ENCODE measurements at regions of chr16 and their contacts with region 1.

Region 1: GRCh38 chr16:30065143-30065850 is at the start of gene ALDOA:
- DNase-seq: peak; percentile 91
- ATAC-seq: peak; percentile 86
- H3K4me3 Mint-ChIP-seq: peak within 1 kb of the TSS; percentile 99
- H3K27ac Mint-ChIP-seq: peak within 1 kb of the TSS; percentile 99
- H3K4me1 Mint-ChIP-seq: peaks cover 35% of the 10 kb centered on the region
- H3K27me3 Mint-ChIP-seq: no peaks in the 10 kb centered on the region
- CTCF ChIP-seq: no peak
- total RNA-seq, gene ALDOA: 611 and 613 TPM in 2 replicates

Region 2: GRCh38 chr16:29784157-29784556 is 281.1 kb before region 1 on chr16:
- CTCF ChIA-PET with region 1: no interaction called
- POLR2A ChIA-PET with region 1: no interaction called
- intact Hi-C with region 1: no loop called
- DNase-seq: no peak
- ATAC-seq: no peak
- H3K4me3 Mint-ChIP-seq: no peak overlapping the region
- H3K27ac Mint-ChIP-seq: no peak overlapping the region
- H3K4me1 Mint-ChIP-seq: peaks cover 14% of the 10 kb centered on the region
- H3K27me3 Mint-ChIP-seq: no peaks in the 10 kb centered on the region
- CTCF ChIP-seq: no peak

Region 3: DNA sequence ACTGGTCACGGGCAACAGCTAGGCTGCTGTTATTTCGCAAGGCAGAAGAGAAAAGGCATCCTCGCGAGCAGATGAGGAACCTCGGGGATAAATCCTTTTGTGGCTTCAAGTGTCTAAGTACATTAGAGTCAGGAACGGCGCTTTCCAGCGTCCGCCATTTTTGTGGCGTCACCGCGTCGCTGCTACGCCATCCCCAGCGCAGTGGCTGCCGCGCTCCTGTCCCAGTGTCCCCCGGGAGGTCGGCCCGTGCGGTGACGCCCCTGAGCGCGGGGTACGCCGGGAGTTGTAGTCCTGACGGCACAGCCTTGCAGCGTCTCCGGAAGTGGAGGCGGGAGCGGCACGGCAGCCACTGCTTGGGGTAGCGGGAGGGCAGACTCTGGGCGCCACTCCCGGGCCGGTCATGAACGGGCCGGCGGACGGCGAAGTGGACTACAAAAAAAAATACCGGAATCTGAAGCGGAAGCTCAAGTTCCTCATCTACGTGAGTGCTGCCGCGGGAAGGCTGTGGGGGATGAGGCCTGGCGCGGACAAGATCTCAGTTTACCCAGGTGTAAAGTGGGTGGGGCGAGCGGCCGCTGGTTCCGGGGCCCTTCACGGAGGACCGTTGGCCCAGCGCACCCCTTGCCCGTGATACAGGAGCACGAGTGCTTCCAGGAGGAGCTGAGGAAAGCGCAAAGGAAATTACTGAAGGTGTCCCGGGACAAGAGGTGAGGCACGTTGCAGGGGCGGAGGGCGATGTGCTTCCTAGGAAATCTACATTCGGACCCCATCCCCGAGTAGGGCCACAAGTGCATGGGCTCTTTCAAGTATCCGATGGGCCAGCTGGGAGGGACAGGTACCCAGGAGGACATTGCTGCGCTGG is 69.2 kb before region 1 on chr16 and contains the start of gene INO80E:
- CTCF ChIA-PET with region 1: no interaction called
- POLR2A ChIA-PET with region 1: interaction called, 6 read pairs
- intact Hi-C with region 1: loop called (anchors 1 kb)
- DNase-seq: peak; percentile 100
- ATAC-seq: peak; percentile 96
- H3K4me3 Mint-ChIP-seq: peak within 1 kb of the TSS; percentile 98
- H3K27ac Mint-ChIP-seq: peak within 1 kb of the TSS; percentile 97
- H3K4me1 Mint-ChIP-seq: peaks cover 29% of the 10 kb centered on the region
- H3K27me3 Mint-ChIP-seq: no peaks in the 10 kb centered on the region
- CTCF ChIP-seq: no peak
- total RNA-seq, gene INO80E: 83.5 and 93.6 TPM in 2 replicates

Region 4: DNA sequence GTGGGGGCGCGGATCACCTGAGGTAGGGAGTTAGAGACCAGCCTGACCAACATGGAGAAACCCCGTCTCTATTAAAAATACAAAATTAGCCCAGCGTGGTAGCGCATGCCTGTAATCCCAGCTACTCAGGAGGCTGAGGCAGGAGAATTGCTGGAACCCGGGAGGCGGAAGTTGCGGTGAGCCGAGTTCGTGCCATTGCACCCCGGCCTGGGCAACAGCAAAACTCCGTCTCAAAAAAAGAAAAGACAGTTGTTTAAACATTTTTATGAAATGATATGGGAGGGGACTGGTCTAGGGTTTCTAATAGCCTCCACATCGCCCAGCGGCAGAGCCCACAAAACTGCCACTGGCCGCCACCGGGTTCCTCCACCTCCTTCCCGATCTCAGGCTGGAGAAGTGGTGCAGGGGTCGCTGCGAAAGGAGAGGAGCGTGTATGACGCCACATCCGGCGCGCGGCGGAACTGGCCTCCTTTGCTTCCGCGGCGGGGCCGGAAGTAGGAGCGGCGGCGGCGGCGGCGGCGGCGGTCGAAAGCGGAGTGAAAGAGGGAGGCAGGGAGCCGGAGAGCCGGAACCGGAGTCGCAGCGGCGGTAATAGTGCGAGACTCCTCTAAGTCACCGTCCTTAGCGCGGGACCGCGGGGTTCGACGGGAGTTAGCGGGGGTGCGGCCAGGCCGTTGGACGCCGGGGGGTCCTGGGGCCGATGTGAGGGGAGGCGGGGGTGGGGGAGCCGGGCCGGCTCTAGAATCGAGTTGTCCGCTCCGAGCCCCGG is 10.4 kb after region 1 on chr16 and contains the start of gene PPP4C:
- CTCF ChIA-PET with region 1: interaction called, 6 read pairs
- POLR2A ChIA-PET with region 1: interaction called, 75 read pairs
- intact Hi-C with region 1: loop called (anchors 1 kb)
- DNase-seq: peak; percentile 86
- ATAC-seq: peak; percentile 86
- H3K4me3 Mint-ChIP-seq: peak within 1 kb of the TSS; percentile 94
- H3K27ac Mint-ChIP-seq: peak within 1 kb of the TSS; percentile 91
- H3K4me1 Mint-ChIP-seq: peaks cover 35% of the 10 kb centered on the region
- H3K27me3 Mint-ChIP-seq: no peaks in the 10 kb centered on the region
- CTCF ChIP-seq: no peak
- total RNA-seq, gene PPP4C: 124 and 131 TPM in 2 replicates

Region 5: DNA sequence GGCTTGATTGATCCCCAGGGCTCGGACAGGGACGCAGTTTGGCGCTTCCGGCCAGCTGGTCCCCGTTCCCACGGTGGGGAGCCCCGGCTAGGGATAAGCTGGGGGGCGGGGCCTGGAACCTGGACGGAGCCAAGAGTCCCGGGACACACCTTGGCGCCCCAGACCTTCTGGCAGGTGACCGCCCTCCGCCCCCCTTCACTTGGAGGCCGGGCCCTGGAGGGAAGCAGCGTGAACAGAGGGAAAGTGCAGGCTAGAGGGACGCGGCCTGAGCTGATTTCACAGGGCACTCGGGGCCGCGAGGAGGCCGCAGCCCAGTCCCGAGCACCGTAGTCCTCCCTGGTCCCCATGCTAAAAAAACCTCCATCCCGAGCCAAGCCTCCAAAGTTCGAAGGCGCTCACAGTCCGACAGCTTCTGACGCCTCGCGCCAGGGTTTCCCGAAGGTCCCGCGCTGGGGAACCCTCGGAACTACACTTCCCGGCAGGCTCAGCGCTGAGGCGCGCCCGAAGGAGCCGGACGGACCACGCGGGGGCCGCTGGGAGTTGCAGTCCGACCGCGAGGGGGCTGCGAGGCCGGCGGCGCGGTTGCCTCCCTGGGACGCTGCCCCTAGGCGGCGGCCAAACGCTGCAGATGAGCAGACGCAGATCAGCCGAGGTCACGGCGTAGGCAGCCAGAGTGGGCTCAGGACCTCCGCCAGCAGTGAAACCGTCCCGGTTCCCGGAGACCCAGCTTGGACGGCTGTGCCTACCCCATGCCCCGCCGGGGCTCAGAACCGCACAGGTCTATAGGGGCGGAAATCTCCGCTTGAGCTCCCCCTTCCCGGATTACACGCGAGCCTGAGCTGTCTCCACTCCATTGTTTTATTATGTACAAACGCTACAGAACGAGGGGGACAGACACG is 26.4 kb after region 1 on chr16 and contains the start of gene TBX6:
- CTCF ChIA-PET with region 1: interaction called, 24 read pairs
- POLR2A ChIA-PET with region 1: interaction called, 116 read pairs
- intact Hi-C with region 1: loop called (anchors 1 kb)
- DNase-seq: peak; percentile 93
- ATAC-seq: peak; percentile 77
- H3K4me3 Mint-ChIP-seq: peak within 1 kb of the TSS; percentile 89
- H3K27ac Mint-ChIP-seq: peak within 1 kb of the TSS; percentile 94
- H3K4me1 Mint-ChIP-seq: peaks cover 50% of the 10 kb centered on the region
- H3K27me3 Mint-ChIP-seq: no peaks in the 10 kb centered on the region
- CTCF ChIP-seq: peak; percentile 67
- total RNA-seq, gene TBX6: 2.3 TPM in 2 replicates

Region 6: DNA sequence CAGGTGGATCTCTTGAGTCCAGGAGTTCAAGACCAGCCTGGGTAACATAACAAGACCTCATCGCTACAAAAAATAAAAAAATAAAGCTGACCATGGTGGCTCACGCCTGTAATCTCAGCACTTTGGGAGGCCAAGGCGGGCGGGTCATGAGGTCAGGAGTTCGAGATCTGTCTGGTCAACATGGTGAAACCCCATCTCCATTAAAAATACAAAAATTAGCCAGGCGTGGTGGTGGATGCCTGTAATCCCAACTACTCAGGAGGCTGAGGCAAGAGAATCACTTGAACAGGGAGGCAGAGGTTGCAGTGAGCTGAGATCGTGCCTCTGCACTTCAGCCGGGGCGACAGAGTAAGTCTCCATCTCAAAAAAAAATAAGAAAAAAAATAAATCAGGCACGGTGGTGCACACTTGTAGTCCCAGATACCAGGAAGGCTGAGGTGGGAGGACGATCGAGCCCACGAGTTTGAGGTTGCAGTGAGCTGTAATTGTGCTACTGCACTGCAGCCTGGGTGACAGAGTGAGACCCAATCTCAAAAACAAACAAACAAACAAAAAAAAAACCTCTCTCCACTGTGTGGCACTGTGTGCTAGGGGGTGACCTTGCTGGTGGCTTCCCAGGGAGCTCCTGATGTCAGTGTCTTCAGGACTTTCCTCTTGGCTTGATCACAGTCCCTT is 77.5 kb after region 1 on chr16:
- CTCF ChIA-PET with region 1: no interaction called
- POLR2A ChIA-PET with region 1: interaction called, 11 read pairs
- intact Hi-C with region 1: no loop called
- DNase-seq: no peak
- ATAC-seq: peak; percentile 57
- H3K4me3 Mint-ChIP-seq: no peak overlapping the region
- H3K27ac Mint-ChIP-seq: no peak overlapping the region
- H3K4me1 Mint-ChIP-seq: peaks cover 12% of the 10 kb centered on the region
- H3K27me3 Mint-ChIP-seq: no peaks in the 10 kb centered on the region
- CTCF ChIP-seq: no peak

Region 7: DNA sequence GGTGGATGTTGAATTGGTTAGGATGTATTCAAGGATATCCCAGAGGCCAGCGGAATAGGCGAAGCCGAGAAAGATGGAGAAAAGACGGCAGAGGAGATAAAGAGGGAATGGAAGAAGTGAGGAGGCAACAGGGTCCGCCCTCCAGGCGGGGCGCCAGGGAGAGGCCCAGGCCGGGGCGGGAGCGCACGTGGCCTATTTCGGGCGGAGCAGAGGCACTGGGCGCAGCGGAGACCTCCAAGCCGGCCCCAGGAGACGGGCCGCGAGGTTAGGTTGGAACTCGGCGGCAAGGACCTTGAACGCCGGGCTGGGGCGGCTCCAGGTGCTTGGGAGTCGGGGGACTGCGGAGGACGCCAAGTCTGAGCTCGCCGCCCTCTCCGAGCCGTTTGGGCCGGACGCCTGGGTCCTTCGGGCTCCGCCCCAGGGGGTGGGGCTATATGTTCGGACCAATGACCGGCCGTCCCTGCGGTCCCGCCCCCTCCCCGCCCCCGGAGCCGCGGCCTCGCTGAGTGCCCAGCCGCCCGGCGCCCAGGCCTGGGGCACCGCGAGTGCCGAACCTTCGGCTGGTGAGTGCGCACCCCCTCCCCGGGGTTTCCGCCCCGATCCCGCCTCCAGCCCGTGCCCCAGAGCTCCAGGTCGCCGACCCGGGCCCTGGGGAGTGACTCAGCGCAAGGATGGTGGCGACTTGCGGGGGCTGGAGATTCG is 342.0 kb after region 1 on chr16 and contains the start of gene ZNF771:
- CTCF ChIA-PET with region 1: no interaction called
- POLR2A ChIA-PET with region 1: interaction called, 8 read pairs
- intact Hi-C with region 1: loop called (anchors 10 kb)
- DNase-seq: peak; percentile 90
- ATAC-seq: peak; percentile 89
- H3K4me3 Mint-ChIP-seq: peak within 1 kb of the TSS; percentile 89
- H3K27ac Mint-ChIP-seq: peak within 1 kb of the TSS; percentile 90
- H3K4me1 Mint-ChIP-seq: peaks cover 27% of the 10 kb centered on the region
- H3K27me3 Mint-ChIP-seq: no peaks in the 10 kb centered on the region
- CTCF ChIP-seq: no peak
- total RNA-seq, gene ZNF771: 4.4 and 5.2 TPM in 2 replicates

Region 8: GRCh38 chr16:30557957-30558788 is 492.9 kb after region 1 on chr16 and contains the start of gene ZNF764:
- CTCF ChIA-PET with region 1: no interaction called
- POLR2A ChIA-PET with region 1: interaction called, 11 read pairs
- intact Hi-C with region 1: no loop called
- DNase-seq: peak; percentile 91
- ATAC-seq: peak; percentile 93
- H3K4me3 Mint-ChIP-seq: peak within 1 kb of the TSS; percentile 83
- H3K27ac Mint-ChIP-seq: peak within 1 kb of the TSS; percentile 84
- H3K4me1 Mint-ChIP-seq: peaks cover 43% of the 10 kb centered on the region
- H3K27me3 Mint-ChIP-seq: no peaks in the 10 kb centered on the region
- CTCF ChIP-seq: no peak
- total RNA-seq, gene ZNF764: 16.1 and 19.2 TPM in 2 replicates